ENCODE measurements at regions of chr2 and their contacts with region 1.

Region 1: GRCh38 chr2:214569419-214570035 is 158.7 kb downstream of the VWC2L start:
- DNase-seq: no peak
- H3K4me3 Mint-ChIP-seq: no peak overlapping the region
- H3K27ac Mint-ChIP-seq: peak overlapping the region; percentile 31
- H3K4me1 Mint-ChIP-seq: peaks cover 20% of the 10 kb centered on the region
- H3K27me3 Mint-ChIP-seq: no peaks in the 10 kb centered on the region
- CTCF ChIP-seq: no peak

Region 2: GRCh38 chr2:214550786-214551185 is 18.7 kb before region 1 on chr2:
- CTCF ChIA-PET with region 1: no interaction called
- intact Hi-C with region 1: loop called (anchors 2 kb)
- DNase-seq: no peak
- H3K4me3 Mint-ChIP-seq: no peak overlapping the region
- H3K27ac Mint-ChIP-seq: no peak overlapping the region
- H3K4me1 Mint-ChIP-seq: no peaks in the 10 kb centered on the region
- H3K27me3 Mint-ChIP-seq: no peaks in the 10 kb centered on the region
- CTCF ChIP-seq: no peak

Measured in Calu3 (cell line).